CD14-positive monocyte (primary cell): ENCODE measurements at regions of chr17 and their contacts with region 1.

Region 1: DNA sequence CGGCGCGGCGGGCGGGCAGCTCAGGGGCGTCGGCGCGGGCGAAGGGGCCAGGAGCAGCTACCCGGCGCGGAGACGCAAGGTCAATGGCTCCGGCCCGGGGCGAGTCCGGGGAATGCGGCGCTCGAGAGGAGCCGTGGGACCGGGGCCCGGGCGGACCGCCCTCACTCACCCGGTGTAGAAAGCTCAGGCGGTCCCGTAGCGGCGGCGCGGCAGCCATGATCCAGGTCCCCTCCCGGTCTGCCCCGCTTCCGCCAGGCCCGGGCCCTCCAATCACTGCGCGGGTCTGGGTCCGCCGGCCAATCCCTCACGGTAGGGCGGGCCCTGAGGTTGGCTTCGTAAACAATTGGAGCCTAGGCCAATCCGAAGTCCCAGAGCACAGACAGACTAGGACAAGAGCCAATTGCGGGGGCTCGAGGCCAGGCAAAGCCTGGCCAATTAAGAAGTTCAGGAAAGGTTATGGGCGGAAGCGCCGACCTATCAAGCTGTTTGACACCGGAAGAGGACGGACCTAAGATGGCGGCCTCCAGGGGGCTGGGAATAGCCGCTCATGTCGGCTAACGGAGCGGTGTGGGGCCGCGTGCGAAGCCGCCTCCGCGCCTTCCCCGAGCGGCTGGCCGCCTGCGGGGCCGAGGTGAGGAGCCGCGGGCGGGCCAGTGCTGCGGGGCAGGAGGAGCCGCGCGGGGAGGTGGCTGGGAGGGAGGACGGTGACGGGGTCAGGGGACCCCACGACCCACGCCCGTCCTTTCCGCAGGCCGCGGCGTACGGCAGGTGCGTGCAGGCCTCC is at the starts of genes NDUFAF8 and TEPSIN:
- DNase-seq: peak; percentile 98 to 100 (median 99)
- H3K4me3 ChIP-seq: peak within 1 kb of the TSS; percentile 69 to 99 (median 70)
- H3K4me3 Mint-ChIP-seq: peak within 1 kb of the TSS; percentile 86 to 94
- H3K27ac ChIP-seq: peak within 1 kb of the TSS in 1 of 2 donors; percentile 82
- H3K27ac Mint-ChIP-seq: peak within 1 kb of the TSS; percentile 29 to 92 (median 88)
- H3K4me1 ChIP-seq: peaks cover 21 to 36% of the 10 kb centered on the region in 2 donors
- H3K4me1 Mint-ChIP-seq: peaks cover 43% of the 10 kb centered on the region
- H3K27me3 ChIP-seq: no peaks in the 10 kb centered on the region
- H3K27me3 Mint-ChIP-seq: no peaks in the 10 kb centered on the region
- CTCF ChIP-seq: no peak
- polyA plus RNA-seq, gene NDUFAF8: 27.0 to 61.3 (median 41.0) TPM
- polyA plus RNA-seq, gene TEPSIN: 3.4 to 136 (median 4.5) TPM

Region 2: GRCh38 chr17:81118308-81119221 is 120.4 kb before region 1 on chr17:
- intact Hi-C with region 1: no loop called
- DNase-seq: peak in 1 of 3 donors; percentile 27
- H3K4me3 ChIP-seq: no peak overlapping the region
- H3K4me3 Mint-ChIP-seq: peak overlapping the region; percentile 47 to 53
- H3K27ac ChIP-seq: no peak overlapping the region
- H3K27ac Mint-ChIP-seq: peak overlapping the region in 4 of 7 donors; percentile 45 to 89 (median 76)
- H3K4me1 ChIP-seq: peaks cover 6 to 8% of the 10 kb centered on the region in 2 donors
- H3K4me1 Mint-ChIP-seq: peaks cover 7% of the 10 kb centered on the region
- H3K27me3 ChIP-seq: no peaks in the 10 kb centered on the region
- H3K27me3 Mint-ChIP-seq: peaks cover 0 to 2% (median 0%) of the 10 kb centered on the region in 3 donors
- CTCF ChIP-seq: no peak

Region 3: DNA sequence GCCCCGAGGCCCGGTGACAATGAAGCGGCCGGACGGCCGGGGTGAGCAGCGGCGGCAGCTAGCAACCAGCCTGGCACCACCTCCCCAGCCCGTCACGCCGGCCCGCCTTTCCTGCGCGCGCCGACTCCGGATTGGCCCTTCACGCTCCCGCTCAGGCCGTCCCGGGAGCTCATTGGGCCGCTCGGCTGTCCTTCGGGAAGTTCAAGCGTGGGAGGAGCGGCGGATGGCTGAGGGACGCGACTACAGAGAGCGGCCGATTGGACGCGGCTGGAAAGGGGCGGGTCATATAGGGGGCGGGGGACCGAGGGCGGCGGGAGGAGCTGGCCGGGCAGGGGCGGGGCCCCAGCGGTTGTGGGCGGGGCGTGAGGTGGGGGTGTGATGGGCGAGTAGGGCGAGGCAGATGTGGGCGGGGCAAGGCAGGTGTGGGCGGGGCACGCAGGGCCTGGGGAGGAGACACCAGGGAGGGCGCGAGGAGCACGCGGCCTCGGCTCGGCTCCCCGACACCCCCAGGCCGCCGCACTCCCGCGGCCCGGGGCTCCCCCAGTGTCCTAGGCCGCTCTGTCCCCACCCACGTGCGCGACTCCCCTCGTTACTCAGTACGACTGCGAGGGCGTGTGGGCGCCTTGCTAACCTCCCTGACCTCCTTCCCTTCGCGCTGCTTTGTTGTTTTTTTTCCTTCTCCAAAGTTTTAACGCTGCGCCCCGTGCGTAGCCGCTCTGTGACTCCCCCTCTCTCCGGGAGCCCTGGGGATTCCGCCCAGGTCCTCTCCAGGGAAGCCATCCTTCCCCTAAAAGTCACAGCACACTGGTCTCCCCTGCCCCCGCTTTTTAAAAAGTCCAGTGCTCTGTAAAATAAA is 15.9 kb before region 1 on chr17 and contains the start of gene CEP131:
- intact Hi-C with region 1: loop called (anchors 1 to 2 kb)
- DNase-seq: peak; percentile 97 to 98 (median 98)
- H3K4me3 ChIP-seq: peak within 1 kb of the TSS; percentile 43 to 86 (median 48)
- H3K4me3 Mint-ChIP-seq: peak within 1 kb of the TSS; percentile 78 to 92
- H3K27ac ChIP-seq: peak within 1 kb of the TSS; percentile 30 to 76
- H3K27ac Mint-ChIP-seq: peak within 1 kb of the TSS; percentile 70 to 91 (median 86)
- H3K4me1 ChIP-seq: peaks cover 31 to 42% of the 10 kb centered on the region in 2 donors
- H3K4me1 Mint-ChIP-seq: peaks cover 32% of the 10 kb centered on the region
- H3K27me3 ChIP-seq: no peaks in the 10 kb centered on the region
- H3K27me3 Mint-ChIP-seq: peaks cover 0 to 4% (median 0%) of the 10 kb centered on the region in 3 donors
- CTCF ChIP-seq: no peak
- polyA plus RNA-seq, gene CEP131: 0.69 to 9.7 (median 1.0) TPM